Activated naive CD8-positive, alpha-beta T cell treated with anti-CD3 and anti-CD28 coated beads, Interleukin-2, amount 10 ng/mL, durations not matched to agents 7 days and 5 days (primary cell): ENCODE measurements at regions of chr1 and their contacts with region 1.

Region 1: GRCh38 chr1:36133484-36133883 is 8.5 kb upstream of the COL8A2 start:
- DNase-seq: no peak
- ATAC-seq: no peak
- H3K4me3 Mint-ChIP-seq: no peak overlapping the region
- H3K27ac Mint-ChIP-seq: no peak overlapping the region
- H3K4me1 Mint-ChIP-seq: peaks cover 7% of the 10 kb centered on the region
- H3K27me3 Mint-ChIP-seq: no peaks in the 10 kb centered on the region

Region 2: DNA sequence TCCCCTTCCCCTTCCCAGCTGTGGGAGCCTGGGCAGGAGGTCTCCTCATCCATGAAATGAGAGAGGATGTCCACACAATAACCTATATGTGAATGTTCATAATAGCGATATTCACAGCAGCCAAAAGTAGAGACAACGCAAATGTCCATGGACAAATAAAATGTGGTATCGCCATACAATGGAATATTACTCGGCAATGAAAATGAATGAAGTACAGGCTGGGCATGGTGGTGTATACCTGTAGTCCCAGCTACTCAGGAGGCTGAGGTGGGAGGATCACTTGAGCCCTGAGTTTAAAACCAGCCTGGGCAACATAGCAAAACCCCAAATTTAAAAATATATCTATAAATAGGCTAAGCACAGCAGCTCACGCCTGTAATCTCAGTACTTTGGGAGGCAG is 31.9 kb before region 1 on chr1:
- POLR2A ChIA-PET with region 1: interaction called, 15 read pairs
- DNase-seq: no peak
- ATAC-seq: no peak
- H3K4me3 Mint-ChIP-seq: no peak overlapping the region
- H3K27ac Mint-ChIP-seq: no peak overlapping the region
- H3K4me1 Mint-ChIP-seq: peaks cover 9% of the 10 kb centered on the region
- H3K27me3 Mint-ChIP-seq: peaks cover 2% of the 10 kb centered on the region

Region 3: GRCh38 chr1:36155408-36156328 is 22.2 kb after region 1 on chr1 and contains the start of gene MAP7D1:
- POLR2A ChIA-PET with region 1: no interaction called
- DNase-seq: peak; percentile 92
- ATAC-seq: peak; percentile 67
- H3K4me3 Mint-ChIP-seq: peak within 1 kb of the TSS; percentile 88
- H3K27ac Mint-ChIP-seq: peak within 1 kb of the TSS; percentile 92
- H3K4me1 Mint-ChIP-seq: peaks cover 58% of the 10 kb centered on the region
- H3K27me3 Mint-ChIP-seq: no peaks in the 10 kb centered on the region
- total RNA-seq, gene MAP7D1: 234 to 237 TPM